ENCODE measurements at regions of chr1 and their contacts with region 1.

Region 1: GRCh38 chr1:154884869-154885701 is 15.0 kb upstream of the KCNN3 start:
- DNase-seq: no peak
- ATAC-seq: no peak

Region 2: DNA sequence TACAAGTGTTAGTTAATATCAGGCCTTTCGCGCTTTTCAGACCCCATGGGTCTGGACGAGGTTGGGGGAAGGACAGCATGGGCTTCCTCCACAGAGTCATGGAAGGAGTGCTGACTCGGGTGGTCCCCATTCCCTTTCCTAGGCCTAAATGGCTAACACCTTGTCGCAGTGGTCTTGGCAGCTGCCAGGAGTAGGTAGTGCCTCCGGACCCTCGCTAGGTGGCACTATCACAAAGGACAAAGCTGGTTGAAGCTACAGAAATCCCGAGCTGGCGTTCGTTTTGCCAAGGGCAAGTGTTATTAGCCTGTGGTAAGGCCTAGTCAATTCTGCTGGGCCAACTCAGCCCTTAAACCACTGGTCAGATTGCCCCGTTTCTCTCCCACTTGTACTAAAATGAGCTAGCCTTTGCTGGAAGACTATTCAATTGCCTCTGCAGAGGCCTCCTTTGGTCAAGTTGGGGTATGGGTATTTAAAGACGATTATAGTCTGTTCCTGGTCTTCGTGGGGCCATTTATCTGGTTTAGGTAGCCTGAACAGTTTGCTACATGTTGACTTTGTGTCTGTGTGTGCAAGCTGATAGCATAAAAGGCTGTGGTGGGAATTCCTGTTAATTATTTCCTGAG is 325.5 kb before region 1 on chr1:
- intact Hi-C with region 1: loop called (anchors 5 kb)
- DNase-seq: peak; percentile 81
- ATAC-seq: peak; percentile 77

Measured in left ventricle myocardium superior (tissue), 1 donor.